ENCODE measurements at regions of chr4 and their contacts with region 1.

Region 1: GRCh38 chr4:9845791-9846493 is 64.5 kb downstream of the DRD5 start:
- DNase-seq: peak in 1 of 2 experiments; percentile 26
- H3K4me3 ChIP-seq: no peak overlapping the region
- H3K27ac ChIP-seq: no peak overlapping the region
- H3K4me1 ChIP-seq: peaks cover 0 to 3% (median 0%) of the 10 kb centered on the region in 4 experiments; a peak in 1 of 7 replicates
- H3K27me3 ChIP-seq: no peaks in the 10 kb centered on the region
- CTCF ChIP-seq: peak in 2 of 3 experiments; percentile 28 to 35; a peak in 2 of 4 replicates
- EP300 ChIP-seq: no peak
- POLR2A ChIP-seq: no peak
- RAD21 ChIP-seq: no peak; a peak in 1 of 4 replicates

Region 2: GRCh38 chr4:9913846-9914245 is 67.9 kb after region 1 on chr4:
- CTCF ChIA-PET with region 1: interaction called, 11 read pairs
- POLR2A ChIA-PET with region 1: no interaction called
- DNase-seq: no peak
- H3K4me3 ChIP-seq: no peak overlapping the region
- H3K27ac ChIP-seq: no peak overlapping the region
- H3K4me1 ChIP-seq: no peaks in the 10 kb centered on the region
- H3K27me3 ChIP-seq: no peaks in the 10 kb centered on the region
- CTCF ChIP-seq: no peak
- EP300 ChIP-seq: no peak
- POLR2A ChIP-seq: no peak
- RAD21 ChIP-seq: no peak

Measured in H1 (cell line).